ENCODE measurements at regions of chr1 and their contacts with region 1.

Region 1: GRCh38 chr1:248622570-248623001 is 12.3 kb downstream of the OR2T11 start:
- DNase-seq: peak; percentile 64
- ATAC-seq: peak; percentile 85
- H3K4me3 ChIP-seq: no peak overlapping the region
- H3K27ac ChIP-seq: no peak overlapping the region
- H3K4me1 ChIP-seq: no peaks in the 10 kb centered on the region
- H3K27me3 ChIP-seq: 0 out of 2 replicates have a peak, but pooled peaks cover 12% of the 10 kb centered on the region
- CTCF ChIP-seq: peak; percentile 77

Region 2: GRCh38 chr1:248045209-248045608 is 577.4 kb before region 1 on chr1:
- CTCF ChIA-PET with region 1: no interaction called
- POLR2A ChIA-PET with region 1: no interaction called
- intact Hi-C with region 1: loop called (anchors 1 kb)
- DNase-seq: no peak
- ATAC-seq: no peak
- H3K4me3 ChIP-seq: no peak overlapping the region
- H3K27ac ChIP-seq: no peak overlapping the region
- H3K4me1 ChIP-seq: no peaks in the 10 kb centered on the region
- H3K27me3 ChIP-seq: no peaks in the 10 kb centered on the region
- CTCF ChIP-seq: no peak

Region 3: DNA sequence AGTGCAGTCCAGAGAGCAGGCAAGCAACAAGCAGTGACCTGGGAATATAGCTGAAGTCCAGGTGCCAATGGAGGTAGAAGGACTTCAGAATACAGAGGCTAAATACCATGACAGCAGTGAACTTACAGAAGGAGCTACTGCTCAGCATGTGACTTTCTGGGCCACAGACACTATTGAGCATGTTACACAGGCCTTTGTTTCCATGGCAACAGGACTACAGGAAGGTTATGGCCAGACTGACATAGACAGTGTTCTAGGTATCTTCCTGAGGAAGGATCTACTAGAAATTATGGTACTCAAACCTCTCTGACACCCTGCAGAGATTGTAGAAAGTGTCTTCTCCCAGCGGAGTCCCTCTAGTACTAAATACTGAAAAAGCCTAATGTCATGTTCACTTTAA is 466.7 kb before region 1 on chr1:
- CTCF ChIA-PET with region 1: no interaction called
- POLR2A ChIA-PET with region 1: no interaction called
- intact Hi-C with region 1: no loop called
- DNase-seq: no peak
- ATAC-seq: no peak
- H3K4me3 ChIP-seq: no peak overlapping the region
- H3K27ac ChIP-seq: no peak overlapping the region
- H3K4me1 ChIP-seq: peaks cover 9% of the 10 kb centered on the region
- H3K27me3 ChIP-seq: no peaks in the 10 kb centered on the region
- CTCF ChIP-seq: no peak

Region 4: GRCh38 chr1:248404024-248404423 is 218.6 kb before region 1 on chr1:
- CTCF ChIA-PET with region 1: no interaction called
- POLR2A ChIA-PET with region 1: no interaction called
- intact Hi-C with region 1: loop called (anchors 1 kb)
- DNase-seq: no peak
- ATAC-seq: no peak
- H3K4me3 ChIP-seq: no peak overlapping the region
- H3K27ac ChIP-seq: no peak overlapping the region
- H3K4me1 ChIP-seq: no peaks in the 10 kb centered on the region
- H3K27me3 ChIP-seq: peaks cover 12% of the 10 kb centered on the region; the same call in 1 of the 2 replicates
- CTCF ChIP-seq: peak; percentile 52

Region 5: DNA sequence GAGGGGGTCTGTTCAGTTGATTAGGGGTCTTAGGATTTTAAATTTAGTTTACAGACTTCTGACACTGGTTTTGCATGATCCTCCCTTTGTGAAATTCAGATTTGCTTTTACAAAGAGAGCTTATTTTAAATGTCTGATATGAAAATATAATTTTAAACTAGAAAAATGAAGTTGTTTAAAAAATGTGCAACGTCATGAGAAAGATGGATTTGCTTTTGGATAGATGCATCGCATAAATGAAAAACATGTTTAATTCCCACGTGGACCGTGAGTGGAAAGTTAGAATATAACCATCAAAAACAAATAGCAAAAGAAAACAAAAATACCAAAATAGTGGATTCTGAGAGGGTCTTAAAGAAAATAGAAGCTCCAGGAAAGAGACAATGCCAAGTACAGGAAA is 151.4 kb before region 1 on chr1:
- CTCF ChIA-PET with region 1: no interaction called
- POLR2A ChIA-PET with region 1: no interaction called
- intact Hi-C with region 1: no loop called
- DNase-seq: no peak
- ATAC-seq: no peak
- H3K4me3 ChIP-seq: no peak overlapping the region
- H3K27ac ChIP-seq: no peak overlapping the region
- H3K4me1 ChIP-seq: no peaks in the 10 kb centered on the region
- H3K27me3 ChIP-seq: peaks cover 18% of the 10 kb centered on the region; the same call in 1 of the 2 replicates
- CTCF ChIP-seq: no peak

Region 6: DNA sequence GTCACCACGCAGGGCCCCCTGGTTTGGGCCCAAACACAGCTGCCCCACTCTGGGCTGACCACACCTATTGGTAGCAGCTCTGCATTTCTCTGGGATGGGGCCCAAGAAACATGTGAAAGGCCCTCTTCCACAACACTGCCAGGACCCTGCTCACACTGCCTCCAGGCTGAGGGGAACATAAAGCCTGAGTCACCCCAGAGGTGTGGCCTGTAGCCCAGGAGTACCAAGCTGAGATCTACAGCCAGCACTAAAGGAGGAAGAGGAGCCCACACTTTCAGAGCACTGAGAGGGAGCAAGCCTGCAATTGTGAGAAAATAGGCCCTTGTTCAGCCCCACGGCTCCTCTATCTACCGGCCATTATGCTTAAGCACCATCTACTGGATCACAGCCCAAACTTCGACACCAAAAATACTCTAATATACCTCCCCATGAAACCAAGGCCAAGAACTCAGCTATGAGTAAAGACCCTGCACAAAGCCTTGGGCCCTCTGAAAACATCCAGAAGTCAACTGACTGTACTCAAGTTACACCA is 10.6 kb before region 1 on chr1:
- CTCF ChIA-PET with region 1: no interaction called
- POLR2A ChIA-PET with region 1: no interaction called
- intact Hi-C with region 1: no loop called
- DNase-seq: peak; percentile 42
- ATAC-seq: peak; percentile 73
- H3K4me3 ChIP-seq: no peak overlapping the region
- H3K27ac ChIP-seq: no peak overlapping the region
- H3K4me1 ChIP-seq: no peaks in the 10 kb centered on the region
- H3K27me3 ChIP-seq: peaks cover 28% of the 10 kb centered on the region
- CTCF ChIP-seq: no peak

Region 7: GRCh38 chr1:248703674-248704073 is 81.1 kb after region 1 on chr1:
- CTCF ChIA-PET with region 1: no interaction called
- POLR2A ChIA-PET with region 1: no interaction called
- intact Hi-C with region 1: no loop called
- DNase-seq: no peak
- ATAC-seq: no peak; the same call in none of the 2 replicates
- H3K4me3 ChIP-seq: no peak overlapping the region
- H3K27ac ChIP-seq: no peak overlapping the region
- H3K4me1 ChIP-seq: no peaks in the 10 kb centered on the region
- H3K27me3 ChIP-seq: 0 out of 2 replicates have a peak, but pooled peaks cover 3% of the 10 kb centered on the region
- CTCF ChIP-seq: peak; percentile 73

Region 8: DNA sequence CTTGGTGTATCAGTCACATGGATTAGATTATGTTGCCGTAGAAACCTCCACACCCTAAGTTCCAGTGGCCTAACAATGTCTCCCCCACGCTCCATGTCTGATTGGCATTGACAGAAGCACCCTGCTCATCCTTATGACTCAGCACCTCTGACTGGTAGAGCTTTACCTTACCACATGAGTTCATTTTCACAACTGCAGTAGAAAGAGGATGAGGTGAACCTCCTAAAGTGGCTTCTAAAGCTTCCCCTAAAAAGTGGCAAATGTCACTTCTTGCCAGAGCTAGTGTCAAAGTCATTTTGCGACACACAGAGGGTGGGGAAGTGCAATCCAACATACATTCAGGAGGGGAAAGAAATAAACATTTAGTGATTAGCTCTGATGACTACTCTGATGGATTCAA is 163.6 kb after region 1 on chr1:
- CTCF ChIA-PET with region 1: no interaction called
- POLR2A ChIA-PET with region 1: no interaction called
- intact Hi-C with region 1: loop called (anchors 1 kb)
- DNase-seq: peak; percentile 48
- ATAC-seq: peak; percentile 47
- H3K4me3 ChIP-seq: no peak overlapping the region
- H3K27ac ChIP-seq: no peak overlapping the region
- H3K4me1 ChIP-seq: peaks cover 7% of the 10 kb centered on the region
- H3K27me3 ChIP-seq: no peaks in the 10 kb centered on the region; the same call in 1 of the 2 replicates
- CTCF ChIP-seq: no peak